Dorsolateral prefrontal cortex (tissue), 120 donors: ENCODE measurements at regions of chrX and their contacts with region 1.

Region 1: GRCh38 chrX:103214870-103215424 is at the start of gene BEX4:
- DNase-seq: peak; percentile 81 to 91 (median 89)
- H3K4me3 ChIP-seq: peak within 1 kb of the TSS; percentile 41 to 90 (median 75)
- H3K27ac ChIP-seq: peak within 1 kb of the TSS; percentile 65 to 97 (median 93)
- H3K27me3 ChIP-seq: peaks cover 0 to 82% (median 24%) of the 10 kb centered on the region in 45 donors
- CTCF ChIP-seq: peak in 3 of 56 donors; percentile 10 to 20 (median 10)
- total RNA-seq, gene BEX4: 48.8 to 251 (median 170) TPM

Region 2: DNA sequence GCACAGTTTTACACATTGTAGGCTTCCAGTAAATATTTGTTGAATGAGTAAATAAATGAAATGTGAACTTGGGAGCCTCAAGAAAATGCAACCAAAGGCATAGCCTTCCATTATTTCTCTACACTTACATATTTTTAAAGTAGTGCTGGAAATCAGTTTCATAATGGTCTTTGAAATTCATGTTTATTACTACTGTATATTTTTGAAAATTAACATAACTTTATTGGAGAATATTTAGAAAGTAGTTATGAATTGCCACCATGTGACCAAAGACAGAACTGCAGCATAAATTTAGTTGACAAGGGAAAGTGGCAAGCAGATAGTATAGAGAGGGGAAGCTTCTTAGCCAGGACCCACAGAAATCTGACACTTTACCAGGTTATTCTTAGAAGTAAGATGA is 33.6 kb after region 1 on chrX:
- intact Hi-C with region 1: loop called (anchors 2 to 5 kb)
- DNase-seq: no peak
- H3K4me3 ChIP-seq: no peak overlapping the region
- H3K27ac ChIP-seq: no peak overlapping the region
- H3K27me3 ChIP-seq: peaks cover 0 to 40% (median 6%) of the 10 kb centered on the region in 45 donors
- CTCF ChIP-seq: peak in 55 of 56 donors; percentile 17 to 74 (median 52)

Region 3: GRCh38 chrX:103254921-103255493 is 40.1 kb after region 1 on chrX and contains the start of gene TCEAL8:
- intact Hi-C with region 1: loop called in 1 of 2 experiments (anchors 2 kb)
- DNase-seq: peak; percentile 78 to 94 (median 88)
- H3K4me3 ChIP-seq: peak within 1 kb of the TSS; percentile 43 to 81 (median 65)
- H3K27ac ChIP-seq: peak within 1 kb of the TSS in 58 of 59 donors; percentile 45 to 94 (median 85)
- H3K27me3 ChIP-seq: peaks cover 0 to 64% (median 11%) of the 10 kb centered on the region in 45 donors
- CTCF ChIP-seq: no peak
- total RNA-seq, gene TCEAL8: 25.0 to 65.5 (median 52.4) TPM

Region 4: DNA sequence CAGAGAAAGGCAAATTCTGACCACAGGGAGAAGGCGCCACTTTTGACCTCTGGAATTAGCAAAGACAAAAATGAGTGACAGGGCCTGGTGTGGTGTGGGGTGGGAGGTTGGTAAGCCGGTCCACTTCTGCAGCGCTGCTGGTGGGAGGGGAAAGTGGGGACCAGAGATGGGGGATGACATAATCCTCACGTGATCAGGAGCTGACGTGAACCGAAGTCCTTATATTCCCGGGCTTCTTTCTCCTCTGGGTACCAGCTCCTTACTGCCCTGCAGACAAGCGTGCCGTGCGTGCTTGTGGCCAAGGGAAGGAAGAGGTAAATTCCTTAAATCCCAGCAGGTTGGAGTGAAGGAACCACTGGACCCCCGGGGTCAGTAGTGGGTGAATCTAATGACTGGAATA is 115.0 kb after region 1 on chrX and contains the start of gene TCEAL7:
- intact Hi-C with region 1: loop called (anchors 10 kb)
- DNase-seq: peak in 9 of 10 donors; percentile 68 to 82 (median 74)
- H3K4me3 ChIP-seq: peak within 1 kb of the TSS; percentile 29 to 74 (median 59)
- H3K27ac ChIP-seq: peak within 1 kb of the TSS in 58 of 59 donors; percentile 39 to 94 (median 88)
- H3K27me3 ChIP-seq: peaks cover 0 to 95% (median 34%) of the 10 kb centered on the region in 45 donors
- CTCF ChIP-seq: peak in 2 of 56 donors; percentile 10
- total RNA-seq, gene TCEAL7: 26.7 to 130 (median 87.7) TPM